Colonic mucosa (tissue), 4 donors: ENCODE measurements at regions of chr3 and their contacts with region 1.

Region 1: DNA sequence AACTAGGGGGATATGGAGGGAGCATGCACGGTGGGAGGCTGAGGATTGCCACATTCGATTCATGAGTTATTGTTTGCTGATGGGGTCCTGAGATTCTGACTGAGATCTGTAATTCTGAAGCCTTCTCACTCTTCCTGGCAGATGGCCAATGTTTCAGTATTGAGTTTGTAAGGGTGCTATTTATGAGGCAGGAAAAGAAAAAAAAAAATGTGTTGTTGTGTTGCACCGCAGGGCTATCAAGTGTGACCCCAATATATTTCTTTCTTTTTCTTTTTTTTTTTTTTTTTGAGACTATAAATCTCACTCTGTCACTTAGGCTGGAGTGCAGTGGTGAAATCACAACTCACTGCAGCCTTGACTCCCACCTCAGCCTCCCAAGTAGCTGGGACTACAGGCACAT is 3.2 kb upstream of the SENP2 start:
- DNase-seq: no peak
- H3K4me3 ChIP-seq: no peak overlapping the region
- H3K27ac ChIP-seq: no peak overlapping the region
- H3K4me1 ChIP-seq: peaks cover 13% of the 10 kb centered on the region
- H3K27me3 ChIP-seq: no peaks in the 10 kb centered on the region
- CTCF ChIP-seq: no peak

Region 2: DNA sequence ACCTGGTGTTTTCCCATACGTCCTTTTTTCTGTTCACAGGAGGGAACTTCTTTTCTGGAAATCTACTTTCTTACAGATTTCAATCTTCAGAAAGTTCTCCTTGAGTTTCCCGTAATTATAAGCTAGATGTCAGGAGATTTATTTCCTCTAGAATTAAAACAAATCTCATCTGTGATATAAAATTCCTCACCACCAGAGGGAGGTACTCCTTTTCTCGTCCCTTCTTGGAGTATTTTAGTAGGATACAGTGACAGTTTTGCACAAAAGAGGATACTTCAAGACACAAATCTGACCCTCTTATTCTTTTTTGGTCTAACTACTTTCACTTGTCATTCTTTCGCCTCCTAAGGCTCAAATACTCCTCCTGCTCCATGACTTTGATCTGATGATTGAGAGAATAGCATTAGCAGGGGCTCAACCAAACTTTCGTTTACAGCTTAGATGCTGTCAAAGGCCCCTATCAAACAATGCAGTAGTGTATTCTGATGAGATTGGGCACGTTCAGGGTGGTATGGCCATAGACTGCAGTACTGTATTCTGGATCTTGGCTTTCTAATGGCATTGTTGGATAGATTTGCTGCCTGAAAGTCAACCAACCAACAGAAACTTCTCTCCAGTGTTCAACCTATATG is 122.0 kb before region 1 on chr3:
- intact Hi-C with region 1: loop called (anchors 5 kb)
- DNase-seq: no peak
- H3K4me3 ChIP-seq: no peak overlapping the region
- H3K27ac ChIP-seq: no peak overlapping the region
- H3K4me1 ChIP-seq: no peaks in the 10 kb centered on the region
- H3K27me3 ChIP-seq: no peaks in the 10 kb centered on the region
- CTCF ChIP-seq: peak; percentile 20

Region 3: DNA sequence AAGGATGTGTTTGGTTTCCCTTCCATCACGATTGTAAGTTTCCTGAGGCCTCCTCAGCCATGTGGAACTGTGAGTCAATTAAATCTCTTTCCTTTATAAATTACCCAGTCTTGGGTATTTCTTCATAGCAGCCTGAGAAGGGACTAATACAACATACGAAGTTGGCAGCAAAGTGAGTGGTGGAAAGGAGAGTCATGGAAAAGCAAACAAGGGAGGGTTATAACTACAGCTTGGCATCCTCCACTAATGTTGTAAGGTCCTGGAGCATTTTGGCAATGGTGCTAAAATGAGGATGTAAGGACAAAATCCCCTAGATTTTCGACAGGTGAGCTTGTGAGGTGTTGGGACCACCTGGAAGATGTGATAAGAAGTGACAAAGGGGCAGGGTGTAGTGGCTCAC is 78.2 kb before region 1 on chr3:
- intact Hi-C with region 1: loop called (anchors 5 kb)
- DNase-seq: no peak
- H3K4me3 ChIP-seq: no peak overlapping the region
- H3K27ac ChIP-seq: no peak overlapping the region
- H3K4me1 ChIP-seq: no peaks in the 10 kb centered on the region
- H3K27me3 ChIP-seq: no peaks in the 10 kb centered on the region
- CTCF ChIP-seq: no peak

Region 4: DNA sequence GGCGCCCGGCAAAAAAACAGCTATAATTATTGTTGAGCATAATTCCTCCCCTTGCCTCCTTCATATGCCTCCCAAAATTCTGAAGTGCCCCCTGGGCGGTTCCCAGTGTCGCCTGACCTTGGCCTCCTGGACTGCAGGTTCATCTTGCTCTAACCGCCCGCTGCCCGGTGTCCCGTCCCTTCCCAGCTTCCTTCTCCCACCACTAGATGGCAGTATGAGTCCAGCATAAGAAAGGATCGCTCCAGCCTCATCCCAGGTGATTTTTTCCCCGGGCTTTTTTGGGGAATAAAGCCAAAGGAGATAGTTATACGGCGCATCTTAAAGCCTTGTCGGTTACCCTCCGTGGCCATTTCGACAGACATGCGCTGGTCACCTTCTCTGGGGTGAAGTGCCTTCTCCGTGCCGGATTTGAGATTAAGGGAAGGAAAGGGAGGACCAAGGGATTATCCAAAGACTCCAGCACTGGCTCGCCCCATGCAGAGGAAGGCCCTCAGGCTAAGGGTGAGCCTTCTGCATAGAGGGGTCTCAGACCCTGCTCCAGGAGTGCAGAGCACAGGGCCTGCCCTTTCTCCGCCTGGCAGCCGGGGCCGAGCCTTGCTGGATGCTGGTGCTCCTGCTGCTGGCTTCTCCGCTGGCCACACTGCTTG is 400.8 kb after region 1 on chr3:
- intact Hi-C with region 1: no loop called
- DNase-seq: peak; percentile 81
- H3K4me3 ChIP-seq: no peak overlapping the region
- H3K27ac ChIP-seq: no peak overlapping the region
- H3K4me1 ChIP-seq: no peaks in the 10 kb centered on the region
- H3K27me3 ChIP-seq: no peaks in the 10 kb centered on the region
- CTCF ChIP-seq: peak; percentile 88

Region 5: GRCh38 chr3:186097663-186098451 is 515.0 kb after region 1 on chr3:
- intact Hi-C with region 1: no loop called
- DNase-seq: peak; percentile 86
- H3K4me3 ChIP-seq: peak overlapping the region; percentile 1
- H3K27ac ChIP-seq: no peak overlapping the region
- H3K4me1 ChIP-seq: peaks cover 13% of the 10 kb centered on the region
- H3K27me3 ChIP-seq: no peaks in the 10 kb centered on the region
- CTCF ChIP-seq: no peak